ENCODE measurements at regions of chr4 and their contacts with region 1.

Region 1: GRCh38 chr4:14856076-14856933 is 146.0 kb upstream of the CPEB2 start:
- DNase-seq: peak in 1 of 9 donors; percentile 65
- ATAC-seq: peak; percentile 89
- H3K4me3 ChIP-seq: no peak overlapping the region
- H3K4me3 Mint-ChIP-seq: no peak overlapping the region
- H3K27ac ChIP-seq: no peak overlapping the region
- H3K27ac Mint-ChIP-seq: peak overlapping the region in 1 of 9 donors; percentile 70
- H3K4me1 ChIP-seq: no peaks in the 10 kb centered on the region
- H3K4me1 Mint-ChIP-seq: peaks cover 0 to 16% (median 0%) of the 10 kb centered on the region in 7 donors
- H3K27me3 ChIP-seq: no peaks in the 10 kb centered on the region
- H3K27me3 Mint-ChIP-seq: peaks cover 0 to 40% (median 25%) of the 10 kb centered on the region in 5 donors

Region 2: GRCh38 chr4:14787894-14788293 is 68.4 kb before region 1 on chr4:
- CTCF ChIA-PET with region 1: no interaction called
- POLR2A ChIA-PET with region 1: no interaction called
- intact Hi-C with region 1: loop called in 1 of 2 experiments (anchors 1 kb)
- DNase-seq: no peak
- ATAC-seq: peak; percentile 72
- H3K4me3 ChIP-seq: no peak overlapping the region
- H3K4me3 Mint-ChIP-seq: no peak overlapping the region
- H3K27ac ChIP-seq: no peak overlapping the region
- H3K27ac Mint-ChIP-seq: no peak overlapping the region
- H3K4me1 ChIP-seq: no peaks in the 10 kb centered on the region
- H3K4me1 Mint-ChIP-seq: peaks cover 0 to 16% (median 0%) of the 10 kb centered on the region in 7 donors
- H3K27me3 ChIP-seq: peaks cover 0 to 4% of the 10 kb centered on the region in 2 donors
- H3K27me3 Mint-ChIP-seq: peaks cover 0 to 37% (median 36%) of the 10 kb centered on the region in 5 donors